Naive thymus-derived CD4-positive, alpha-beta T cell (primary cell): ENCODE measurements at regions of chr4 and their contacts with region 1.

Region 1: DNA sequence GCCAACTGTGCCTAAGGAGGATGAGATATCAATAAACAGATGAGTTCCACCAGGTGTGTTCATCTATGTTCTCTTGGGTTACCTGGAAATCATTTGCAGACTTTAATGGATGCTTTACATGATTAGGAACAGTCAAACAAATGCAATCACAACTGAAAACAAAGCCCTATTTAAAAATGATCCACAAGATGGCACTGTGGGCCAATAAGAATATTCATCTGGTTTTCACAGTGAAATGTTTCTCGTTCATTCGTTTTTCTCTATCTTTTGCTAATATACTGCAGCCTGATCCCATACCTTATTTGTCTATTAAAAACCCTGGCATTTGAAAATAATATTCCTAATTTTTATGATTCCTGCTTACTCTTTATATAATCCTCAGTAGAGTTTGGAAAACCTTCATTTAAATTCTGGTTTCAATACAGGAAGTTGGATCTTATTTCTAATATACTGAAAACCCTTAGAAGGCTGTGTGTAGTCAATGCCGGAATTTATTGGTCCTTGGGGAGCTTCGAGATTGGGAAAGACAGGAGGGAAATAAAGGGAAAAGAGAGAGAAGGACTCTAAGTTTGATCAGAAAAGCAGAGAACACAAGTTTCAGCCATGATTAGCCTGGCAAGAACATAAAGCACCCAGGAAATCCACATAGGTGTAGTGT is 63.8 kb upstream of the TAPT1 start:
- DNase-seq: peak in 5 of 9 donors; percentile 8 to 21 (median 19)
- ATAC-seq: peak; percentile 45
- H3K4me3 ChIP-seq: no peak overlapping the region
- H3K4me3 Mint-ChIP-seq: peak overlapping the region in 7 of 10 donors; percentile 7 to 69 (median 12)
- H3K27ac ChIP-seq: no peak overlapping the region
- H3K27ac Mint-ChIP-seq: no peak overlapping the region
- H3K4me1 ChIP-seq: no peaks in the 10 kb centered on the region
- H3K4me1 Mint-ChIP-seq: peaks cover 0 to 5% (median 4%) of the 10 kb centered on the region in 7 donors
- H3K27me3 ChIP-seq: no peaks in the 10 kb centered on the region
- H3K27me3 Mint-ChIP-seq: peaks cover 5 to 37% (median 17%) of the 10 kb centered on the region in 5 donors

Region 2: GRCh38 chr4:16443504-16444088 is 153.6 kb after region 1 on chr4:
- CTCF ChIA-PET with region 1: no interaction called
- POLR2A ChIA-PET with region 1: no interaction called
- intact Hi-C with region 1: loop called in 1 of 2 experiments (anchors 1 kb)
- DNase-seq: peak in 2 of 9 donors; percentile 1 to 12
- ATAC-seq: no peak
- H3K4me3 ChIP-seq: no peak overlapping the region
- H3K4me3 Mint-ChIP-seq: no peak overlapping the region
- H3K27ac ChIP-seq: no peak overlapping the region
- H3K27ac Mint-ChIP-seq: no peak overlapping the region
- H3K4me1 ChIP-seq: no peaks in the 10 kb centered on the region
- H3K4me1 Mint-ChIP-seq: no peaks in the 10 kb centered on the region
- H3K27me3 ChIP-seq: no peaks in the 10 kb centered on the region
- H3K27me3 Mint-ChIP-seq: peaks cover 0 to 16% (median 8%) of the 10 kb centered on the region in 5 donors

Region 3: GRCh38 chr4:16916719-16917337 is 626.8 kb after region 1 on chr4:
- CTCF ChIA-PET with region 1: no interaction called
- POLR2A ChIA-PET with region 1: no interaction called
- intact Hi-C with region 1: loop called in 1 of 2 experiments (anchors 2 kb)
- DNase-seq: peak; percentile 24 to 77 (median 58)
- ATAC-seq: peak; percentile 95
- H3K4me3 ChIP-seq: no peak overlapping the region
- H3K4me3 Mint-ChIP-seq: no peak overlapping the region
- H3K27ac ChIP-seq: no peak overlapping the region
- H3K27ac Mint-ChIP-seq: no peak overlapping the region
- H3K4me1 ChIP-seq: no peaks in the 10 kb centered on the region
- H3K4me1 Mint-ChIP-seq: peaks cover 0 to 4% (median 0%) of the 10 kb centered on the region in 7 donors
- H3K27me3 ChIP-seq: no peaks in the 10 kb centered on the region
- H3K27me3 Mint-ChIP-seq: peaks cover 0 to 4% (median 0%) of the 10 kb centered on the region in 5 donors

Region 4: DNA sequence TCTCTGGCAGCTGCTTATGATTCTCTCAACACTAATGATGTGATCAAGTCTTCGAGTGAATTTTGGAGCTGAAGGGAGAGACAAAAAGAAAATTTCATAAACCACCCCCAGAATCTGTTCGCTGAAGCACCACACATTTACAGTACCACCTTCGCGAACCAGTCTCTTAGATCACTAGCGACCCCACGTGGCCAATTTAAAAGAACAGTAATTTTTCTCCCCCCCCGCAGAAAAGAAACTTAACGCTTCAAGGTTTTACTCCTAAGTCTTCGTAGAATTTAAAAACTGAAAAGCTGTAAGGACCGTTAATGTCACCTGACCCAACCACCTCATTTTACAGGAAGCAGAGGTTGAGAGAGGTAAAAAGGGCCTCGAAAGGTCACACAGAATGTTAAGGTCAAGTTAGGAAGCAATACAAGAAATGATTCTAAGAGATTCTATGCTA is 1034.4 kb after region 1 on chr4:
- CTCF ChIA-PET with region 1: no interaction called
- POLR2A ChIA-PET with region 1: no interaction called
- intact Hi-C with region 1: loop called (anchors 1 kb)
- DNase-seq: peak in 7 of 9 donors; percentile 16 to 43 (median 31)
- ATAC-seq: peak; percentile 56
- H3K4me3 ChIP-seq: no peak overlapping the region
- H3K4me3 Mint-ChIP-seq: peak overlapping the region; percentile 22 to 77 (median 57)
- H3K27ac ChIP-seq: no peak overlapping the region
- H3K27ac Mint-ChIP-seq: peak overlapping the region in 5 of 9 donors; percentile 17 to 67 (median 42)
- H3K4me1 ChIP-seq: peaks cover 0 to 6% of the 10 kb centered on the region in 2 donors
- H3K4me1 Mint-ChIP-seq: peaks cover 8 to 14% (median 10%) of the 10 kb centered on the region in 7 donors
- H3K27me3 ChIP-seq: no peaks in the 10 kb centered on the region
- H3K27me3 Mint-ChIP-seq: peaks cover 0 to 4% (median 0%) of the 10 kb centered on the region in 5 donors

Region 5: DNA sequence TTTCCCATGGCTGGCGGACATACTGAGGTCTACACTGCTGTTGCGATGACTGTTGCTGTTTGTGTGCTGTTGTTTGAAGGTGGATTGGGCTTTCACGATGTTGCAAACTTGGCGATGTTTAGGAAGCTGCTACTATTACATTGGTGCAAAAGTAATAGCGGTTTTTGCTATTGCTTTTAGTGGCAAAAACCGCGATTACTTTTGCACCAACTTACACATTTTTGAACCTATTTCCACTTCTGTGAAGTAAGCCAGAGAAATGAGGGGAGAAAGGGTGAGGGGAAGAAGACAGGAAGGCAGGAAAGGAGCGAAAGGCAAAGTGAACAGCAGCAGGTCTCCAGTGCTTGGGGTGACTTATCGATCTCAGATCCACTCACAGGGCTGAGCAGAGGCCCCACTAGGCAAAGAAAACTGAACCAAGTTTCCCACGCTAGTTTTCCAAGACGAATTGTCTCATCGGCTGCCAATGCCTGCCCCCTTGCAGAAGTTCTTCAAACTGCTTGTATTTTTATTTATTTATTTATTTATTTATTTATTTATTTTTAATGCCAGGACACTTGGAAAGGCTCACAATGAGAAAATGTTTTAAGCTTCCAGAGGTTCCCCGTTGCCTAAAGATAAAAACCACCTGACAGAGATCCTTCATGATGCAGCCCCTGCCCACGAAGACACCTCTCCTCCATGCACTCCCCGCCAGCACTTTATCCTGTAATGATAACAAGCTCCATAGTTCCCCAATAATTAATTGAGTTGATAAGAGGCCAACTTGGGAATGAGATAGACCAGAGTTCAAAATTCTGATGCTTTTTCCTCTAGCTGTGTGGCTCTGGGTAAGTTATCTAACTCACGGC is 1178.6 kb after region 1 on chr4:
- CTCF ChIA-PET with region 1: no interaction called
- POLR2A ChIA-PET with region 1: no interaction called
- intact Hi-C with region 1: loop called (anchors 1 to 2 kb)
- DNase-seq: no peak
- ATAC-seq: no peak
- H3K4me3 ChIP-seq: no peak overlapping the region
- H3K4me3 Mint-ChIP-seq: no peak overlapping the region
- H3K27ac ChIP-seq: no peak overlapping the region
- H3K27ac Mint-ChIP-seq: no peak overlapping the region
- H3K4me1 ChIP-seq: no peaks in the 10 kb centered on the region
- H3K4me1 Mint-ChIP-seq: peaks cover 0 to 3% (median 0%) of the 10 kb centered on the region in 7 donors
- H3K27me3 ChIP-seq: no peaks in the 10 kb centered on the region
- H3K27me3 Mint-ChIP-seq: no peaks in the 10 kb centered on the region